ENCODE measurements at regions of chrX and their contacts with region 1.

Region 1: GRCh38 chrX:45515262-45516215 is 314.9 kb upstream of the DIPK2B start:
- DNase-seq: peak; percentile 72
- H3K4me3 ChIP-seq: no peak overlapping the region
- H3K27ac ChIP-seq: peak overlapping the region; percentile 4
- H3K4me1 ChIP-seq: peaks cover 21% of the 10 kb centered on the region
- H3K27me3 ChIP-seq: no peaks in the 10 kb centered on the region
- CTCF ChIP-seq: peak; percentile 80

Region 2: GRCh38 chrX:45748369-45748774 is 232.8 kb after region 1 on chrX:
- CTCF ChIA-PET with region 1: no interaction called
- POLR2A ChIA-PET with region 1: no interaction called
- intact Hi-C with region 1: loop called (anchors 1 kb)
- DNase-seq: no peak
- H3K4me3 ChIP-seq: no peak overlapping the region
- H3K27ac ChIP-seq: peak overlapping the region; percentile 5
- H3K4me1 ChIP-seq: peaks cover 12% of the 10 kb centered on the region
- H3K27me3 ChIP-seq: no peaks in the 10 kb centered on the region
- CTCF ChIP-seq: no peak

Region 3: DNA sequence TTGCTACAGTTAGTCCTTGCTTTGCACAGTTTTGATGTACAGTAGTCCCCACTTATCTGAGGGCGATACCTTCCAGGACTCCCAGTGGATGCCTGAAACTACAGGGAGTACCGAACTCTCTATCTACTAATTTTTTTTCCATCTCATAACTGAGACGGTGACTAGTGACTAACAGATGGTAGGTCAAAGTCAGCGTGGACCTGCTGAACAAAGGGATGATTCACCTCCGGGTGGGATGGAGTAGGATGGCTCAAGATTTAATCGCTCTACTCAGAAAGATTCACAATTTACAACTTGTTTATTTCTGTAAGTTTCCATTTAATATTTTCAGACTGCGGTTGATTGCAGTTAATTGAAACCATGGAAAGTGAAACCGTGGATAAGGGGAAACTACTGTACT is 373.9 kb after region 1 on chrX:
- CTCF ChIA-PET with region 1: no interaction called
- POLR2A ChIA-PET with region 1: no interaction called
- intact Hi-C with region 1: no loop called
- DNase-seq: no peak
- H3K4me3 ChIP-seq: no peak overlapping the region
- H3K27ac ChIP-seq: no peak overlapping the region
- H3K4me1 ChIP-seq: no peaks in the 10 kb centered on the region
- H3K27me3 ChIP-seq: no peaks in the 10 kb centered on the region
- CTCF ChIP-seq: no peak